H1 (cell line): ENCODE measurements at regions of chr6 and their contacts with region 1.

Region 1: GRCh38 chr6:150016324-150017185 is 8.8 kb downstream of the RAET1L start:
- DNase-seq: peak in 1 of 2 experiments; percentile 57
- H3K4me3 ChIP-seq: no peak overlapping the region
- H3K27ac ChIP-seq: no peak overlapping the region
- H3K4me1 ChIP-seq: no peaks in the 10 kb centered on the region
- H3K27me3 ChIP-seq: peaks cover 36 to 60% (median 46%) of the 10 kb centered on the region in 4 experiments
- CTCF ChIP-seq: peak in 2 of 3 experiments; percentile 51 to 61; a peak in 3 of 4 replicates
- EP300 ChIP-seq: no peak
- POLR2A ChIP-seq: no peak
- RAD21 ChIP-seq: peak; percentile 74 to 79

Region 2: DNA sequence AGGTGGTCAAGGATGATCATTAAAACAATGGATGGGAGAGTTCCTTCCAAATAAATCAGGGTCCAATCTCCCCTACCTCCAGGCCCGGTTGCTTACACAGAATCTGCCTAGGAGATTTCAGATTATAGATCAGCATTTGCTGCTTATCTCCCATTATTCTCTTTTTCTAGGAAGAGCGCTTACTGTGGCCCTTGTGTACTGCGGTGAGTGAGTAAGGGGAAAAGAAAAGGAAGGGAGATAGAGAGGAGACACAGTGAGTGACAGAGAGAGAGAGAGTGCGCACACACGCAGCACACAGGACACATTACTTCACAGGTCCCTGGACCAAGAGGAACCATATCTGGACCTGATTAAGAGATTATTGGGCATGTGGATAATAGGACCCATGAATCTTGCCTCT is 304.8 kb before region 1 on chr6:
- CTCF ChIA-PET with region 1: no interaction called
- POLR2A ChIA-PET with region 1: no interaction called
- DNase-seq: no peak
- H3K4me3 ChIP-seq: no peak overlapping the region
- H3K27ac ChIP-seq: no peak overlapping the region
- H3K4me1 ChIP-seq: peaks cover 0 to 16% (median 9%) of the 10 kb centered on the region in 4 experiments; a peak in 4 of 7 replicates
- H3K27me3 ChIP-seq: no peaks in the 10 kb centered on the region
- CTCF ChIP-seq: no peak
- EP300 ChIP-seq: no peak
- POLR2A ChIP-seq: no peak
- RAD21 ChIP-seq: no peak

Region 3: GRCh38 chr6:149925974-149926777 is 90.4 kb before region 1 on chr6:
- CTCF ChIA-PET with region 1: interaction called, 15 read pairs
- POLR2A ChIA-PET with region 1: no interaction called
- DNase-seq: peak in 1 of 2 experiments; percentile 96
- H3K4me3 ChIP-seq: peak overlapping the region; percentile 13 to 64 (median 56); a peak in 7 of 8 replicates
- H3K27ac ChIP-seq: no peak overlapping the region
- H3K4me1 ChIP-seq: peaks cover 0 to 5% (median 0%) of the 10 kb centered on the region in 4 experiments; a peak in 2 of 7 replicates
- H3K27me3 ChIP-seq: peaks cover 37 to 53% (median 50%) of the 10 kb centered on the region in 4 experiments
- CTCF ChIP-seq: peak; percentile 86 to 92 (median 91)
- EP300 ChIP-seq: no peak
- POLR2A ChIP-seq: no peak
- RAD21 ChIP-seq: peak; percentile 89

Region 4: GRCh38 chr6:149934249-149935156 is 82.1 kb before region 1 on chr6:
- CTCF ChIA-PET with region 1: interaction called, 12 read pairs
- POLR2A ChIA-PET with region 1: no interaction called
- DNase-seq: peak in 1 of 2 experiments; percentile 77
- H3K4me3 ChIP-seq: no peak overlapping the region
- H3K27ac ChIP-seq: no peak overlapping the region
- H3K4me1 ChIP-seq: peaks cover 0 to 6% (median 3%) of the 10 kb centered on the region in 4 experiments; a peak in 5 of 7 replicates
- H3K27me3 ChIP-seq: peaks cover 37 to 55% (median 49%) of the 10 kb centered on the region in 4 experiments
- CTCF ChIP-seq: peak in 2 of 3 experiments; percentile 63 to 66; a peak in 3 of 4 replicates
- EP300 ChIP-seq: no peak
- POLR2A ChIP-seq: no peak
- RAD21 ChIP-seq: peak; percentile 75 to 77

Region 5: DNA sequence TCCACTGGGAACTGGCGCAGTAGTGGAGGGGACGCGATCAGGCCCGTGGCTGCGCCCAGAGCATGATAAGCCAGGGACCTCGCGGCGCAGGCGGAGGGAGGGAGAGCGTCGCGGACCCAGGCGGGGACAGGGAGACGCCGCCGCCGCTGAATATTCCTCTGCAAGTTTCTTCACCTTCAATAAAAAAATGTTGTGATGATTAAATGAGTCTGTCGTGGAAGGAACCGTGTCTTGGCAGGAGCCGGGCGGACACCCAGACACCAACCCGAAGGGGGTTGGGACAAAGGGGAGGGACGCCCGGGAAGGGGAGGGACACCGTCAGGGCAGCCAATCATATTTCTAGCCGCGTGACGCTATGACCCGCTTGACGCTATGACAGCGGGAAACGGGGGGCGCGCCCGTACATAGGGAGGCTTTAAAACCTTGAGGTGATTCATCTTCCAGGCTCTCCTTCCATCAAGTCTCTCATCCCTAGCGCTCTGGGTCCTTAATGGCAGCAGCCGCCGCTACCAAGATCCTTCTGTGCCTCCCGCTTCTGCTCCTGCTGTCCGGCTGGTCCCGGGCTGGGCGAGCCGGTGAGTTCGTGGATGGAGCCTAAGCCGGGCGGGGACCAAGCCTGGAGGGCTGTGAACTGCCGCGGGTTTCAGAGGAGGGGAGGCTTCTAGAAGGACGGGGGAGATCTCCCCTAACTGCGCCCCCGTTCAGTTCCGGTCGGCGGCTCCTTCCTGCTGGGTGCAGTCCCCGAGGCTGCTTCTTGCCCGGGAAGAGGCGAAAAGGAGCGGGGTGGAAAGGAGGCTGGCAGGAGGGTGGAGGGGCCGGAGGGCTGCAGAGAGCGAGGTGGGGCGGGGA is 74.7 kb before region 1 on chr6 and contains the start of gene ULBP2:
- CTCF ChIA-PET with region 1: interaction called, 10 read pairs
- POLR2A ChIA-PET with region 1: no interaction called
- DNase-seq: peak in 1 of 2 experiments; percentile 79
- H3K4me3 ChIP-seq: peak within 1 kb of the TSS; percentile 40 to 69 (median 48)
- H3K27ac ChIP-seq: no peak within 1 kb of the TSS
- H3K4me1 ChIP-seq: peaks cover 0 to 6% (median 3%) of the 10 kb centered on the region in 4 experiments; a peak in 5 of 7 replicates
- H3K27me3 ChIP-seq: peaks cover 56 to 80% (median 69%) of the 10 kb centered on the region in 4 experiments
- CTCF ChIP-seq: no peak
- EP300 ChIP-seq: no peak
- POLR2A ChIP-seq: no peak
- RAD21 ChIP-seq: no peak
- total RNA-seq, gene ULBP2: not detected in 2 replicates

Region 6: GRCh38 chr6:149950423-149950822 is 66.1 kb before region 1 on chr6:
- CTCF ChIA-PET with region 1: interaction called, 14 read pairs
- POLR2A ChIA-PET with region 1: no interaction called
- DNase-seq: peak in 1 of 2 experiments; percentile 31
- H3K4me3 ChIP-seq: no peak overlapping the region
- H3K27ac ChIP-seq: no peak overlapping the region
- H3K4me1 ChIP-seq: peaks cover 0 to 2% (median 0%) of the 10 kb centered on the region in 4 experiments; a peak in 1 of 7 replicates
- H3K27me3 ChIP-seq: peaks cover 13 to 62% (median 38%) of the 10 kb centered on the region in 4 experiments
- CTCF ChIP-seq: no peak
- EP300 ChIP-seq: no peak
- POLR2A ChIP-seq: no peak
- RAD21 ChIP-seq: no peak

Region 7: GRCh38 chr6:150046943-150047342 is 30.4 kb after region 1 on chr6:
- CTCF ChIA-PET with region 1: no interaction called
- POLR2A ChIA-PET with region 1: no interaction called
- DNase-seq: no peak
- H3K4me3 ChIP-seq: no peak overlapping the region
- H3K27ac ChIP-seq: no peak overlapping the region
- H3K4me1 ChIP-seq: no peaks in the 10 kb centered on the region
- H3K27me3 ChIP-seq: no peaks in the 10 kb centered on the region
- CTCF ChIP-seq: no peak
- EP300 ChIP-seq: no peak
- POLR2A ChIP-seq: no peak
- RAD21 ChIP-seq: no peak